Tibial artery (tissue), 4 donors: ENCODE measurements at regions of chr1 and their contacts with region 1.

Region 1: GRCh38 chr1:24744911-24745710 is at the start of gene CLIC4:
- DNase-seq: peak; percentile 99 to 100
- H3K4me3 ChIP-seq: peak within 1 kb of the TSS; percentile 88 to 93
- H3K27ac ChIP-seq: peak within 1 kb of the TSS; percentile 91 to 98
- H3K4me1 ChIP-seq: peaks cover 0 to 43% (median 24%) of the 10 kb centered on the region in 4 donors
- H3K27me3 ChIP-seq: no peaks in the 10 kb centered on the region
- CTCF ChIP-seq: no peak

Region 2: GRCh38 chr1:24415334-24415909 is 329.7 kb before region 1 on chr1 and contains the start of gene NIPAL3:
- intact Hi-C with region 1: no loop called
- DNase-seq: peak; percentile 95
- H3K4me3 ChIP-seq: peak within 1 kb of the TSS; percentile 50 to 59
- H3K27ac ChIP-seq: no peak within 1 kb of the TSS
- H3K4me1 ChIP-seq: peaks cover 0 to 28% (median 13%) of the 10 kb centered on the region in 4 donors
- H3K27me3 ChIP-seq: peaks cover 0 to 15% of the 10 kb centered on the region in 2 donors
- CTCF ChIP-seq: peak; percentile 42 to 56

Region 3: DNA sequence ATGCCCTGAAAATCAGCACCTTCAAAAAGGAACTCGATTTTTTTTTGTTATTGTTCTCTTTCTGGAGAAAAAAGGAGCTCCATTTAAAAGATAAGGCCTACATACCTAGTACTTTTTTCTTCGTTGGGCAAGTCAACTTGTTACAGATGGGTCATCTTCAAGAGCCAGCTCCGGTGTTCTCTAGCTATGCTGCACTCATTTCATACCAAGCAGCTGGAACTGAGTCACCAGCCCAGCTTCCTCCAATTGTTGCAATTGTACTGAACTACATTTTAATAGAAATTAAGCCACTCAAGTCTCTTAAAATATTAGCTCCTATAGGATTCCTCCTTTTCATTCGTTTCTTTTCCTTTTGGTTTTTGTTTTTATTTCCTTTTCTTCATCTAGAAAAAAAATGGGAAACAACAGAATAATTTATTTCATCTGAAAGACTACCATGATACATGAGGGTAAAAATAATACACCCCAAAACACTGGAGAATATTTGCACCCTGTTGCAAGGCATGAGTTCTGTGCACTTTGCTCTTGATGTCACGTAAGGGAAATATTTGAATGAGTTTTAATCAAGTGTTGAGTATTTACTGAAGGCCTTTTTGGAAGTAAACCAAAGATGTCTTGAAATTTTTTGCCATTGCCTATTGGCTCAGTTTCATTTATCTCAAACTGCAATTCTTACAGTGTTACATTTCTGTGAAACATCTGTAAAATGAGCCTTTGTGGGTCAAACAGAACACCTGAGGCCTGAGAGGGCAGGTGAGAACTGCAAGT is 60.6 kb after region 1 on chr1:
- intact Hi-C with region 1: loop called (anchors 5 kb)
- DNase-seq: peak in 1 of 2 donors; percentile 48
- H3K4me3 ChIP-seq: no peak overlapping the region
- H3K27ac ChIP-seq: peak overlapping the region; percentile 3 to 19
- H3K4me1 ChIP-seq: peaks cover 0 to 96% (median 50%) of the 10 kb centered on the region in 4 donors
- H3K27me3 ChIP-seq: no peaks in the 10 kb centered on the region
- CTCF ChIP-seq: no peak